AG04449 (cell line): ENCODE measurements at regions of chr1 and their contacts with region 1.

Region 1: DNA sequence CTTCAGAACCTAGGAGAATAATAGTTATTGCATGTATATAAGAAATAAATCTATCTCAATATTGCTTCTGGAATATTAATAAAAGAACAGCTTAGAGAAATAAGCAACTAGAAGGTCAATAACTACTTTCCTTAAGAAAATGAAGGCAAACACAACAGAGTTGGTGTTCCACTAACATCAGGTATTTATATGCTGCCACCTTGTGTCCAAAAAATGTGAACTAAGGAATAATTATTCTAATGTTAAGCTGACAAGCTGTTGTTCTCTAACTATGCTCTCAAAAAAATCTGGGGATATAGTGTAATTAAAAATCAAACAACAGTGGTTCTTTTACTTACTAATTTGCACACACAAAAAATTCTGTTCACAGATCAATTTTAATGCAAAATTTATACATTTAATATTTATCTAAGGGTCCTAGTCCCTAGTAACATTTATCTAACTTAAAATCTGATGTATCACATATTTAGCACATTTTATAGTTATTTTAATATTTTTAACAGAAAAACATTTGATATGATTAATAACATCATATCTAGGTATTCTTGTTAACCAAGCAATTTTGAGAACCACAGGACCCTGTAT is 39.6 kb downstream of the UCHL5 start:
- DNase-seq: no peak
- H3K4me3 ChIP-seq: no peak overlapping the region
- CTCF ChIP-seq: peak; percentile 25

Region 2: DNA sequence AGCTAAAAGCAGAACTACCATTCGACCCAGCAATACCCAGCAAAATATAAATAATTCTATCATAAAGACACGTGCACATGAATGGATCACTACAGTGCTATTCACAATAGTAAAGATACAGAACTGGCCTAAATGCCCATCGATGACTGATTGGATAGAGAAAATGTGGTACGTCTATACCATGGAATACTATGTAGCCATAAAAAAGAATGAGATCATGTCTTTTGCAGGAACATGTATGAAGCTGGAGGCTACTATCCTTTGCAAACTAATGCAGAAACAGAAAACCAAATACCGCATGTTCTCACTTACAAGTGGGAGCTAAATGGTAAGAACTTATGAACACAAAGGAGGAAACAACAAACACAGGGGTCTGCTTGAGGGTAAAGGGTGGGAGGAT is 13.7 kb before region 1 on chr1:
- CTCF ChIA-PET with region 1: interaction called, 14 read pairs
- POLR2A ChIA-PET with region 1: no interaction called
- DNase-seq: no peak
- H3K4me3 ChIP-seq: no peak overlapping the region
- CTCF ChIP-seq: no peak

Region 3: DNA sequence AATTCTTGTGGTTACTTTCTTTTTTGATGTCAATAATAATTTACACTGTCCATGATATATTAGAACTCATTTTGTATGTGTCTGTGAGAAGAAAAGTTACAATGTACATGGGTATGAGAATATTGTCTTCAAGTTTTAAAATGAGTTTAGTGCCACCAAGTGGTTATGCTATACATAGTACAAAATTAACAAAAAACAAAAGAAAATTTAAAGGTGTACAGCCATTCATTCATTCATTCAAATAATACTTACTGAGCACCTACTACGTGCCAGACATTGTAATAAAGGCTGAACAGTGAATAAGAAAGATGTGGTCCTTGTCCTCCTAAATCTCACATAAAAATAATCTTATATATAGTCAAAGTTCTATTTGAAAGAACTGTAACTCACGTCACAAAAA is 11.9 kb after region 1 on chr1:
- CTCF ChIA-PET with region 1: interaction called, 43 read pairs
- POLR2A ChIA-PET with region 1: no interaction called
- DNase-seq: no peak
- H3K4me3 ChIP-seq: no peak overlapping the region
- CTCF ChIP-seq: no peak